CD8-positive, alpha-beta T cell (primary cell): ENCODE measurements at regions of chr21 and their contacts with region 1.

Region 1: GRCh38 chr21:36156339-36156814 is 247 bp upstream of the DOP1B start:
- DNase-seq: peak; percentile 98 to 100 (median 100)
- ATAC-seq: peak; percentile 89
- H3K4me3 ChIP-seq: peak overlapping the region; percentile 76 to 78
- H3K4me3 Mint-ChIP-seq: peak overlapping the region; percentile 83
- H3K27ac ChIP-seq: peak overlapping the region; percentile 65 to 68
- H3K27ac Mint-ChIP-seq: peak overlapping the region; percentile 72
- H3K4me1 ChIP-seq: peaks cover 24% of the 10 kb centered on the region
- H3K4me1 Mint-ChIP-seq: peaks cover 33% of the 10 kb centered on the region
- H3K27me3 ChIP-seq: no peaks in the 10 kb centered on the region
- H3K27me3 Mint-ChIP-seq: no peaks in the 10 kb centered on the region
- CTCF ChIP-seq: no peak

Region 2: DNA sequence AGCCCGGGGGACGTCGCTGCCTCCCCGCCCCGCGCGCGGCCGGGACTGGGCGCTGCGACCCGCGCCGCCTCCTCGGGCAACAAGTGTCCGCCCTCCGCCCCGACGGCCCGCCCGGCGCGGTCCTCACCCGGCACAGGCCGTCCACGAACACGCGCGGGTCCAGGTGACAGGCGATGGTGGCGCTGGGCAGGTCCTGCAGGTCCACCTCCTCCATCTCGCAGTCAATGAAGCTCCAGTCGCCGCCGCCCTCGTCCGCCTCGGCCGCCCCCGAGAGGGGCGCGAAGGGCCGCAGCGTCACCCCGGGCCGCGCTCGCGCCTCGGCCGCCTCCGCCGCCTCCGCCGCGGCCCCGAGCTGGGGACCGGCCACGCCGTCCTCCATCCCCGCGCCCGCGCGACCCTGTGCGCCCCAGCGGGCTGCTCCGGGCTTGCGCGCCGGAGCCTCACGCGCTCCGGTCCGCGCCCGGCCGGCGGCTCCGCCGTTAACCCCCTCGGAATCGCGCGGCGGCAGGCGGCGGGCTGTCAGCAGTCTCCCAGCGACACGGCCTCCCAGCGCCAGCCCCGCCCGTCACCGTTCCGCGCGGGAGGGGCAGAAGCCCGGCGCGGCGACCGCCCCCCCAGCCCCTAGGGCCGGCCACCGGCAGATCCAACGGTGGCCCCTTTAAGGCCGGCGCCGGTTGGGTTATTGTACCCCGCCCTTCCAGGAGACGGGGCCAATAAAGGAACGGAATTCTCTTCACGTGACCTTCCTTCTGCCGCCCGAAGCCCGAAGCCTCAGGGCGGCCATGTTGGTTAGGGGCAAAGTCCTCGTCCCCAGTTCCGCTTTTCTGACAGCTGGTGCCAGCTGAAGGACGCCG is 1541.5 kb before region 1 on chr21 and contains the start of gene RCAN1:
- CTCF ChIA-PET with region 1: no interaction called
- POLR2A ChIA-PET with region 1: no interaction called
- intact Hi-C with region 1: loop called in 1 of 2 experiments (anchors 5 kb)
- DNase-seq: peak; percentile 64 to 94 (median 85)
- ATAC-seq: peak; percentile 95
- H3K4me3 ChIP-seq: peak within 1 kb of the TSS; percentile 51 to 63
- H3K4me3 Mint-ChIP-seq: peak within 1 kb of the TSS; percentile 90
- H3K27ac ChIP-seq: peak within 1 kb of the TSS; percentile 41 to 68
- H3K27ac Mint-ChIP-seq: peak within 1 kb of the TSS; percentile 91
- H3K4me1 ChIP-seq: peaks cover 13% of the 10 kb centered on the region
- H3K4me1 Mint-ChIP-seq: peaks cover 21% of the 10 kb centered on the region
- H3K27me3 ChIP-seq: no peaks in the 10 kb centered on the region
- H3K27me3 Mint-ChIP-seq: no peaks in the 10 kb centered on the region
- CTCF ChIP-seq: no peak
- total RNA-seq, gene RCAN1: 0.73 to 1.0 TPM

Region 3: GRCh38 chr21:36113647-36114428 is 42.5 kb before region 1 on chr21:
- CTCF ChIA-PET with region 1: no interaction called
- POLR2A ChIA-PET with region 1: interaction called, 4 read pairs
- intact Hi-C with region 1: loop called in 1 of 2 experiments (anchors 1 kb)
- DNase-seq: peak in 6 of 9 experiments; percentile 26 to 90 (median 62)
- ATAC-seq: peak; percentile 82
- H3K4me3 ChIP-seq: peak overlapping the region; percentile 51 to 71
- H3K4me3 Mint-ChIP-seq: peak overlapping the region; percentile 81
- H3K27ac ChIP-seq: peak overlapping the region; percentile 57 to 61
- H3K27ac Mint-ChIP-seq: peak overlapping the region; percentile 91
- H3K4me1 ChIP-seq: peaks cover 37% of the 10 kb centered on the region
- H3K4me1 Mint-ChIP-seq: peaks cover 32% of the 10 kb centered on the region
- H3K27me3 ChIP-seq: no peaks in the 10 kb centered on the region
- H3K27me3 Mint-ChIP-seq: no peaks in the 10 kb centered on the region
- CTCF ChIP-seq: no peak

Region 4: GRCh38 chr21:36169436-36170128 is 13.2 kb after region 1 on chr21:
- CTCF ChIA-PET with region 1: interaction called, 13 read pairs
- POLR2A ChIA-PET with region 1: interaction called, 17 read pairs
- intact Hi-C with region 1: loop called (anchors 1 kb)
- DNase-seq: no peak
- ATAC-seq: no peak
- H3K4me3 ChIP-seq: no peak overlapping the region
- H3K4me3 Mint-ChIP-seq: no peak overlapping the region
- H3K27ac ChIP-seq: no peak overlapping the region
- H3K27ac Mint-ChIP-seq: no peak overlapping the region
- H3K4me1 ChIP-seq: peaks cover 13% of the 10 kb centered on the region
- H3K4me1 Mint-ChIP-seq: peaks cover 7% of the 10 kb centered on the region
- H3K27me3 ChIP-seq: no peaks in the 10 kb centered on the region
- H3K27me3 Mint-ChIP-seq: no peaks in the 10 kb centered on the region
- CTCF ChIP-seq: no peak

Region 5: GRCh38 chr21:36260030-36260787 is 103.8 kb after region 1 on chr21:
- CTCF ChIA-PET with region 1: interaction called, 3 read pairs
- POLR2A ChIA-PET with region 1: no interaction called
- intact Hi-C with region 1: loop called in 1 of 2 experiments (anchors 5 kb)
- DNase-seq: peak in 8 of 9 experiments; percentile 19 to 82 (median 49)
- ATAC-seq: peak; percentile 93
- H3K4me3 ChIP-seq: peak overlapping the region; percentile 53 to 55
- H3K4me3 Mint-ChIP-seq: peak overlapping the region; percentile 86
- H3K27ac ChIP-seq: peak overlapping the region; percentile 53 to 85
- H3K27ac Mint-ChIP-seq: peak overlapping the region; percentile 91
- H3K4me1 ChIP-seq: peaks cover 9% of the 10 kb centered on the region
- H3K4me1 Mint-ChIP-seq: peaks cover 12% of the 10 kb centered on the region
- H3K27me3 ChIP-seq: no peaks in the 10 kb centered on the region
- H3K27me3 Mint-ChIP-seq: no peaks in the 10 kb centered on the region
- CTCF ChIP-seq: peak; percentile 83

Region 6: DNA sequence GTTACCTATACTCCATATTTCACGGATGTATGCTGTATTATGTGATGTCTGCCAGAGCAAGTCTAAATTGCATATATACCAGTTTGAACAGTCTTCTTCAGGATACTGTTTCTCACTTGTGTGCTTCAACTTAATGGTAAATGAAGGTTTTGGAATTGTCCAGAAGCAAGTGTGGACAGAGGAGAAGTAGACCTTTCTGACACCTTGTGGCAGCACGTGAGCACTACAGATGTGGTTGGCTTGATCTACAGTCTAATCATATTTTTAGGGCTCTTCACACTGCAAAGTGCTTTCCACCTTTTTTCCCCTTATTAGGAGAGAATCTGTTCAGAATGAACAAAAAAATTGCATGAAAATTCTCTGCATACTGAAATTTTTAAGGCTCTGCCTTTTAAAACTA is 174.5 kb after region 1 on chr21:
- CTCF ChIA-PET with region 1: interaction called, 15 read pairs
- POLR2A ChIA-PET with region 1: no interaction called
- intact Hi-C with region 1: loop called (anchors 1 kb)
- DNase-seq: peak in 7 of 9 experiments; percentile 16 to 75 (median 51)
- ATAC-seq: peak; percentile 92
- H3K4me3 ChIP-seq: no peak overlapping the region
- H3K4me3 Mint-ChIP-seq: no peak overlapping the region
- H3K27ac ChIP-seq: no peak overlapping the region
- H3K27ac Mint-ChIP-seq: peak overlapping the region; percentile 76
- H3K4me1 ChIP-seq: peaks cover 33% of the 10 kb centered on the region
- H3K4me1 Mint-ChIP-seq: peaks cover 51% of the 10 kb centered on the region
- H3K27me3 ChIP-seq: no peaks in the 10 kb centered on the region
- H3K27me3 Mint-ChIP-seq: no peaks in the 10 kb centered on the region
- CTCF ChIP-seq: peak; percentile 86

Region 7: DNA sequence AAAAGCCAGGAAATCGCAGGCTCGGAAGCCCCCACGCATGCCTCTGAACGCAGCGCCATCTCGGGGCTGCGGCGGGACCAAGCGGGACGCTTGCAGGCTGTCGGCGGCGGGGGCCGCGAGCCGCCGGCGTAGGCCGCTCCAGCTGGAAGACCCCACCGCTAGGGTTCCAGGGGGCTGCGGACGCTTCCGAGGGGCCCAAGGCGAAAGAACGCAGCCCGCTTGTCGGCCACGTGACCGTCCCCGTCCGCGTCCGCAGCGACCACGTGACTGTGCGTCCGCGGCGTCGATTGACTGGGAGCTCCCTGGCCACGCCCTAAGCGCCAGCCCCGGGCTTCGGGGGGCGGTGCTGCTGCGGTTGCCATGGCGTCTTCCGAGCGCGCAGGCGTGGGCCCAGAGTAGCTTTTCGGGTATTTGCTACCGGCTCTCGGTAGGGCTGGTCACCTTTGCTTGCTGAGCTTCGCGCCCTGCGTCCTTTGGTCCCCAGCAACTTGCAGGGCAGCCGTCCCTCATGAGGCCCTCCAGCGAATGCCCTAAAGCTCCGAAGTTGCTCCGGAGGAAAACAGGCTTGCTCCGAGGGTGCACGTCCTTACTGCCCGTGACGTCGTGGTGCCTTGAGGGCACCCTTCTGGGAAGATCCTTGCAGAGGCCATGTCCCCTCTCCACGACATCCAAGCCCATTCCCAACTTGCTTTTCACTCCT is 1407.4 kb after region 1 on chr21:
- CTCF ChIA-PET with region 1: no interaction called
- POLR2A ChIA-PET with region 1: no interaction called
- intact Hi-C with region 1: loop called in 1 of 2 experiments (anchors 5 kb)
- DNase-seq: peak; percentile 82 to 97 (median 91)
- ATAC-seq: peak; percentile 76
- H3K4me3 ChIP-seq: peak overlapping the region; percentile 92 to 96
- H3K4me3 Mint-ChIP-seq: peak overlapping the region; percentile 99
- H3K27ac ChIP-seq: peak overlapping the region; percentile 97 to 99
- H3K27ac Mint-ChIP-seq: peak overlapping the region; percentile 100
- H3K4me1 ChIP-seq: peaks cover 15% of the 10 kb centered on the region
- H3K4me1 Mint-ChIP-seq: peaks cover 17% of the 10 kb centered on the region
- H3K27me3 ChIP-seq: no peaks in the 10 kb centered on the region
- H3K27me3 Mint-ChIP-seq: no peaks in the 10 kb centered on the region
- CTCF ChIP-seq: peak; percentile 63